CD8-positive, alpha-beta T cell (primary cell): ENCODE measurements at regions of chr12 and their contacts with region 1.

Region 1: GRCh38 chr12:76441016-76441415 is 92.8 kb upstream of the BBS10 start:
- DNase-seq: no peak
- ATAC-seq: no peak
- H3K4me3 ChIP-seq: no peak overlapping the region
- H3K4me3 Mint-ChIP-seq: no peak overlapping the region
- H3K27ac ChIP-seq: no peak overlapping the region
- H3K27ac Mint-ChIP-seq: no peak overlapping the region
- H3K4me1 ChIP-seq: peaks cover 5% of the 10 kb centered on the region
- H3K4me1 Mint-ChIP-seq: peaks cover 38% of the 10 kb centered on the region
- H3K27me3 ChIP-seq: no peaks in the 10 kb centered on the region
- H3K27me3 Mint-ChIP-seq: no peaks in the 10 kb centered on the region
- CTCF ChIP-seq: no peak

Region 2: DNA sequence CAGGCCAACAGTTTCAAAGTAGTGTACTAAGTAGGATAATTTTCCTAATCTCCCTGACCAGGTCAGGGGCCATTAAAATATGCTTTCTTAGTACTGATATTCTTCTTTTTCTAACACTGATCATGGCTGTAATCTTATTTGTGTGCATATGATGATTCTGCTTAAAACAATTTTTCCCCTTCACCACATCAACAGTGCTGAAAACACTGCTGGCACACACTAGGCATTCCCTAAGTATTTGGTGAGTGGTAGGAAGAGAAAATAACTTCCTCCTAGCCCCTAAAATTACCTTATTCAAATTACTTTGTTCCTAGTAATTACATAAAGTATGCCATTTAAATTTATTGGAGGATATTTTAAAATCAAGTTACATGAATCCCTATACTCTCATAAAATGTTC is 42.9 kb before region 1 on chr12:
- CTCF ChIA-PET with region 1: no interaction called
- POLR2A ChIA-PET with region 1: no interaction called
- intact Hi-C with region 1: no loop called
- DNase-seq: no peak
- ATAC-seq: no peak
- H3K4me3 ChIP-seq: no peak overlapping the region
- H3K4me3 Mint-ChIP-seq: no peak overlapping the region
- H3K27ac ChIP-seq: no peak overlapping the region
- H3K27ac Mint-ChIP-seq: no peak overlapping the region
- H3K4me1 ChIP-seq: no peaks in the 10 kb centered on the region
- H3K4me1 Mint-ChIP-seq: no peaks in the 10 kb centered on the region
- H3K27me3 ChIP-seq: no peaks in the 10 kb centered on the region
- H3K27me3 Mint-ChIP-seq: no peaks in the 10 kb centered on the region
- CTCF ChIP-seq: no peak

Region 3: GRCh38 chr12:76420219-76420618 is 20.8 kb before region 1 on chr12:
- CTCF ChIA-PET with region 1: no interaction called
- POLR2A ChIA-PET with region 1: no interaction called
- intact Hi-C with region 1: loop called in 1 of 2 experiments (anchors 2 kb)
- DNase-seq: no peak
- ATAC-seq: no peak
- H3K4me3 ChIP-seq: no peak overlapping the region
- H3K4me3 Mint-ChIP-seq: no peak overlapping the region
- H3K27ac ChIP-seq: no peak overlapping the region
- H3K27ac Mint-ChIP-seq: no peak overlapping the region
- H3K4me1 ChIP-seq: no peaks in the 10 kb centered on the region
- H3K4me1 Mint-ChIP-seq: peaks cover 32% of the 10 kb centered on the region
- H3K27me3 ChIP-seq: no peaks in the 10 kb centered on the region
- H3K27me3 Mint-ChIP-seq: no peaks in the 10 kb centered on the region
- CTCF ChIP-seq: no peak